Activated CD4-positive, alpha-beta memory T cell treated with anti-CD3 and anti-CD28 coated beads, Interleukin-2, amount 10 ng/mL, durations not matched to agents 7 days and 5 days (primary cell): ENCODE measurements at regions of chr11 and their contacts with region 1.

Region 1: DNA sequence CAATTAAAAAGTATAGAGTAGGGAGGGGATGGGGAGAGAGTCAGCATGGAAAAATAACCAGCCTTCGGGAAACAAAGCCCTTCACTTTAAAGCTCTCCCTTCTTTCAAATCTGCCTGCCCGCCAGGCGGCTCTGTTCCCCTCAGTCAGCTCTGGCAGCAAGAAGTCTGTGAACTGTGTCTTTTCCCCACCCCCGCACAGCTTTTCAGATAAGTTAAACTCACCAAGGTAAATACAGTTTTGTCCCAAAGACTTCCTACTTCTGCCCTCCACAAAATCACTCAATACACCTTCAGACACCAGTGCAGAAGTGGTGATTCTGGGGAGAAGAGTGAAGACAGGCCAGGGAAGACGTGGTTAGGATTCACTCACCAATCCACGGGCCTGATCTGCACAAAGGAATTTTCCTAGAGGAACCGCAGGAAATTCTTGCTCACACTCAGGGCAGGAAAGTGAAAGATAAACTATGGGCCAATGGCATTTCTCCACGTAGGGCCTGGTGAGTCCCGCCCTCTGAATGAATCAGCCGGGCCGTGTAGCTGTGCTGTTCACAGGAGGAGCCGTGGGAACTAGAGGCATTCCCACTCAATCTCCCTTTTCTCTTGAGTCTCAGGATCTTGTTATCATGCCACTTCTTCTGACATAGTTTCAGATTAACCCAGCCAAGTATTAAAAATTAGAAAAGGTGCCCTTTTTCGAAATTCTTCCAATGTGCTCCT is at the start of gene TRIM5:
- DNase-seq: peak; percentile 83
- H3K4me3 Mint-ChIP-seq: peak within 1 kb of the TSS; percentile 91
- H3K27ac Mint-ChIP-seq: peak within 1 kb of the TSS; percentile 90
- H3K4me1 Mint-ChIP-seq: peaks cover 39% of the 10 kb centered on the region
- H3K27me3 Mint-ChIP-seq: no peaks in the 10 kb centered on the region
- total RNA-seq, gene TRIM5: 33.5 to 33.9 TPM

Region 2: DNA sequence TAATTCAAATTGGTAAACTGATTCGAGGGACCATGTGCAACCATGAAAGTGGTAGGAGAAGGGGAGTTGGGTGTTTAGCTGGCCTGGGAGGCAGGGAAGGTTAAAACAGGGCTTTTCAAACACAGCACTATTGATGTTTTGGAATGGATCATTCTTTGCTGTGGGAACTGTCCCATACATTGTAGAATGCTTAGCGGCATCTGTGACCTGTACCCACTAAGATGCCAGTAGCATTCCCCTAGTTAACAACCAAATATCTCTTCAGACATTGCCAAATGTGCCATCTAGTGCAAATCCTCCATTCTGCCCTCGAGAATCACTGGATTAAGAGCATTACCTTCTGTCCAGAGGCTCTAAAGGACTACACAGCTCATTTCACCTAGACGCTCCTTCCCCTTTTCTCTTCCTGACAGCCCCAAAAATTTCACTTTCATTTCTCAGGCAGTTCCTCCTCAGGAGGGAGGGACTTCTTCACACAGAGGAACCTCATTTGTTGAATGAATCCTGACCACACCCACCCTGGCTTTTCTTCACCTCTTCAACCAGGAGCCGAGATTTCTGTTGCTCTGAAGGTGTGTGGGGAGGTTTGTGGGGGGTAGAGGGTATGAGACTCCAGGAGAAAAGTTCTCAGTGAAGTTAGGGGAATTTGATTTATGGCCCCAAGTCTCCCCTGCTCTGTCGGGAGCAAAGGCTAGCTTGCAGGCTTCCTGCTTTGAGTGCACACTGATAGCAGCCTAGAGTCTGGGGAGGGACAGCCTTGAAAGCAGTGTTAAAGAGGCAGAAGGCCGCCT is 60.1 kb before region 1 on chr11 and contains the start of gene TRIM34:
- CTCF ChIA-PET with region 1: interaction called, 6 read pairs
- POLR2A ChIA-PET with region 1: interaction called, 25 read pairs
- DNase-seq: peak; percentile 72
- H3K4me3 Mint-ChIP-seq: peak within 1 kb of the TSS; percentile 90
- H3K27ac Mint-ChIP-seq: peak within 1 kb of the TSS; percentile 89
- H3K4me1 Mint-ChIP-seq: peaks cover 48% of the 10 kb centered on the region
- H3K27me3 Mint-ChIP-seq: no peaks in the 10 kb centered on the region
- total RNA-seq, gene TRIM34: 18.2 to 19.8 TPM

Region 3: DNA sequence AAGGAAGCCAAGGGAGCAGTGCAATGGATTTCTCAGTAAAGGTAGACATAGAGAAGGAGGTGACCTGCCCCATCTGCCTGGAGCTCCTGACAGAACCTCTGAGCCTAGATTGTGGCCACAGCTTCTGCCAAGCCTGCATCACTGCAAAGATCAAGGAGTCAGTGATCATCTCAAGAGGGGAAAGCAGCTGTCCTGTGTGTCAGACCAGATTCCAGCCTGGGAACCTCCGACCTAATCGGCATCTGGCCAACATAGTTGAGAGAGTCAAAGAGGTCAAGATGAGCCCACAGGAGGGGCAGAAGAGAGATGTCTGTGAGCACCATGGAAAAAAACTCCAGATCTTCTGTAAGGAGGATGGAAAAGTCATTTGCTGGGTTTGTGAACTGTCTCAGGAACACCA is 11.4 kb after region 1 on chr11:
- CTCF ChIA-PET with region 1: interaction called, 4 read pairs
- POLR2A ChIA-PET with region 1: interaction called, 19 read pairs
- DNase-seq: no peak
- H3K4me3 Mint-ChIP-seq: no peak overlapping the region
- H3K27ac Mint-ChIP-seq: no peak overlapping the region
- H3K4me1 Mint-ChIP-seq: peaks cover 34% of the 10 kb centered on the region
- H3K27me3 Mint-ChIP-seq: no peaks in the 10 kb centered on the region

Region 4: DNA sequence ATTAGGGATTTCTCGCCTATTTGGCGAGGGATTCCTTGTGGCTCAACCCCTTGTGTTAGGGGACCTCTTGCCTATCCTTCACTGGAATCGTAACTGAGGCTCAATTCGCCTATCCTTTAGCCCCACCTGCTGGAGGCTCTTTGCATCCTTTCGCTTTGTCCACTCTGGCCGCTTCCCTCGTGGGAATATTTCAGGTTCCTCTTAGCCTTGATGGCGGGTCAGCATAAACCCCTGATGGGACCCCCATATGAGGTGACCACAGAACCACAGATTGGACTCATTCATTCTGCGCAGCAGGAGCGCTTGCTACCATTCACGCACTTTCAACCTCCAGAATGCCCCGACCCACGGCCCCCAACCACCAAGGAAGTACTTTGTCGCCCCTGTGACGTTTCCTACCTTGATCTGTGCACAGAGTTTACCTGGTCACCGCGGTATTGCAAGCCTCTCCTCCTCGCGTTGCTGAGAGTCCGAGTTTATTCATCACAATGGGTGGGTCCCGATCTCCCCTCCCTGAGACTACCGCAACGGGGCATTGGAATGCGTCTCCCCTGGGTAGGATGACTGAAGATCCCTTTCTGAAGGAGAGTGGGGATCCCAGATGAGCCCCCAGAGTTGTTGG is 123.8 kb after region 1 on chr11 and contains the start of gene OR52N2:
- CTCF ChIA-PET with region 1: interaction called, 10 read pairs
- POLR2A ChIA-PET with region 1: no interaction called
- DNase-seq: peak; percentile 74
- H3K4me3 Mint-ChIP-seq: peak within 1 kb of the TSS; percentile 84
- H3K27ac Mint-ChIP-seq: peak within 1 kb of the TSS; percentile 5
- H3K4me1 Mint-ChIP-seq: peaks cover 9% of the 10 kb centered on the region
- H3K27me3 Mint-ChIP-seq: peaks cover 21% of the 10 kb centered on the region
- total RNA-seq, gene OR52N2: not detected

Region 5: DNA sequence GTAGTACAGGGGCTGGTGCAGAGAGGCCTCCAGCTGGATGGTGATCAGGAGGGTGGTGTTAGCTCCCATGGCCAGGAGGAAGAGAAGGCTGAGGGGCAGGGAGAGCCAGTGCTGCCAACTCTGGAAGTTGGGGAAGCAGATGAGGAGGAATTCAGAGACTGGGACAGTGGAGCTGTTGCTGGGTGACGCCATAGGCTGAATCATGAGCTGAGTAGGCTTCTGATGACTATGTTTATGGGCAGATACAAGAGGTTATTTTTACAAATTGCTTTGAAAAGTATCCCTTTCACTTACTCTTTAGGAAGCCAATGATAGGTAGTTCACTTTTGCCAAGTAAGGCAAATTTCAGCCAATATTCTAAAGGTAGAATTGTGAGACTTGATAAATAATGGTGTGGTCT is 342.7 kb after region 1 on chr11:
- CTCF ChIA-PET with region 1: no interaction called
- POLR2A ChIA-PET with region 1: no interaction called
- DNase-seq: no peak
- H3K4me3 Mint-ChIP-seq: no peak overlapping the region
- H3K27ac Mint-ChIP-seq: no peak overlapping the region
- H3K4me1 Mint-ChIP-seq: no peaks in the 10 kb centered on the region
- H3K27me3 Mint-ChIP-seq: peaks cover 9% of the 10 kb centered on the region